Dorsolateral prefrontal cortex (tissue), 120 donors: ENCODE measurements at regions of chr6 and their contacts with region 1.

Region 1: GRCh38 chr6:33585403-33586107 is 5.5 kb upstream of the BAK1 start:
- DNase-seq: peak; percentile 69 to 87 (median 78)
- H3K4me3 ChIP-seq: peak overlapping the region in 44 of 59 donors; percentile 1 to 53 (median 32)
- H3K27ac ChIP-seq: peak overlapping the region in 14 of 59 donors; percentile 1 to 58 (median 22)
- H3K27me3 ChIP-seq: no peaks in the 10 kb centered on the region
- CTCF ChIP-seq: peak; percentile 75 to 100 (median 96)

Region 2: GRCh38 chr6:33467091-33467490 is 118.5 kb before region 1 on chr6:
- intact Hi-C with region 1: no loop called
- DNase-seq: no peak
- H3K4me3 ChIP-seq: no peak overlapping the region
- H3K27ac ChIP-seq: no peak overlapping the region
- H3K27me3 ChIP-seq: no peaks in the 10 kb centered on the region
- CTCF ChIP-seq: no peak

Region 3: DNA sequence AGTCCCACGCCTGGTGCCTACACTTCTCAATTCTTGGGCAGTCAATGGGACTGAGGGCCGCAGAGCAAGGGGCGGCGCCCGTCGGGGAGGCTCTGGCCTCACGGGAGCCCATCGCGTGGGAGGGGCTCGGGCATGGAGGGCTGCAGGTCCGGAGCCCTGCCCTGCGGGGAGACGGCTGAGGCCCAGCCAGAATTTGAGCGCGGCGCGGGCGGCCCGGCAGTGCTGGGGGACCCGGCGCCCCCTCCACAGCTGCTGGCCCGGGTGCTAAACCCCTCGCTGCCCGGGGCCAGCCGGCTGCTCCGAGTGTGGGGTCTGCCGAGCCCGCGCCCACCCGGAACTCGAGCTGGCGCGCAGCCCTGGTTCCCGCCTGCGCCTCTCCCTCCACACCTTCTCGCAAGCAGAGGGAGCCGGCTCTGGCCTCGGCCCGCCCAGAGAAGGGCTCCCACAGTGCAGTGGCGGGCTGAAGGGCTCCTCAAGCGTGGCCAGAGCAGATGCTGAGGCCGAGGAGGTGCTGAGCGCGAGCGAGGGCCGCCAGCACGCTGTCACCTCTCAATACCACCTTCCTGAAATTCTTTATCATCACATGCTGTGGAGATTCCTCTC is 64.0 kb before region 1 on chr6:
- intact Hi-C with region 1: no loop called
- DNase-seq: no peak
- H3K4me3 ChIP-seq: no peak overlapping the region
- H3K27ac ChIP-seq: no peak overlapping the region
- H3K27me3 ChIP-seq: peaks cover 0 to 4% (median 0%) of the 10 kb centered on the region in 45 donors
- CTCF ChIP-seq: no peak

Region 4: DNA sequence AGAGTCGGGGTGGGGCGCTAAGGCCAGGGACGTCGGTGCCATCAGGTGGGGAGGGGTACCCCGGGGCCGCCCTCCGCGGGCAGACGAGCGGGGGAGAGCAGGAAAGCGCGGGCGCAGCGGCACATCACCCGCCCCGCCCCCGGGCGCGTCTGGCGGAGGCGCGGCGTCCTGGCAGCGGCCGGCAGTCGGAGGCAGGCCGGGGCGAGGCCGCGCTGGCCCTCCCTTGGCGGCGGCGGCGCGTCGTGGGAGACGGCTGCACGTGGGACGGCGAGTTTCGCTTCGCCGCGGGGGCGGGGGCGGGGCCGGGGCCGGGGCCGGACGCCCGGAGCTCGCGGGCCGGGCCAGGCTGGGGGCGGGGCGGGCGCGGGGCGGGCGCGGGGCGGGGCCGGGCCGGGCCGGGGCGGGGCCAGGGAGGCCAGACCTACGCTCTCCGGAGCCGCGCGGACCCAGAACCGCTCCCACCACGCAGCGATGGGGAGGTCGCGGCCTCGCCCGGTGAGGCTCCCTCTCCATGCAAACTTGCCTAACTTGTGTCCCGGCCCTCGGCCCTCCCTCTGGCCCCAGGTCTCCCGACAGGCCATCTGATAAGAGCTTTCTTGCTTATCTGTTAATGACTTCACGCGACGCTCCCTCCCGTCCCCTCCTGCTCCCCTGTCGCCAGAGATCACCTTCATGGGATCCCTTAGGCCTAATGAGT is 48.1 kb after region 1 on chr6:
- intact Hi-C with region 1: loop called (anchors 2 to 5 kb)
- DNase-seq: peak in 6 of 10 donors; percentile 31 to 69 (median 51)
- H3K4me3 ChIP-seq: peak overlapping the region; percentile 33 to 71 (median 56)
- H3K27ac ChIP-seq: peak overlapping the region in 9 of 59 donors; percentile 3 to 73 (median 31)
- H3K27me3 ChIP-seq: no peaks in the 10 kb centered on the region
- CTCF ChIP-seq: no peak

Region 5: GRCh38 chr6:33700391-33701050 is 115.0 kb after region 1 on chr6:
- intact Hi-C with region 1: loop called (anchors 2 to 5 kb)
- DNase-seq: peak in 5 of 10 donors; percentile 28 to 67 (median 54)
- H3K4me3 ChIP-seq: no peak overlapping the region
- H3K27ac ChIP-seq: peak overlapping the region in 1 of 59 donors; percentile 19
- H3K27me3 ChIP-seq: no peaks in the 10 kb centered on the region
- CTCF ChIP-seq: peak in 55 of 56 donors; percentile 33 to 81 (median 64)

Region 6: DNA sequence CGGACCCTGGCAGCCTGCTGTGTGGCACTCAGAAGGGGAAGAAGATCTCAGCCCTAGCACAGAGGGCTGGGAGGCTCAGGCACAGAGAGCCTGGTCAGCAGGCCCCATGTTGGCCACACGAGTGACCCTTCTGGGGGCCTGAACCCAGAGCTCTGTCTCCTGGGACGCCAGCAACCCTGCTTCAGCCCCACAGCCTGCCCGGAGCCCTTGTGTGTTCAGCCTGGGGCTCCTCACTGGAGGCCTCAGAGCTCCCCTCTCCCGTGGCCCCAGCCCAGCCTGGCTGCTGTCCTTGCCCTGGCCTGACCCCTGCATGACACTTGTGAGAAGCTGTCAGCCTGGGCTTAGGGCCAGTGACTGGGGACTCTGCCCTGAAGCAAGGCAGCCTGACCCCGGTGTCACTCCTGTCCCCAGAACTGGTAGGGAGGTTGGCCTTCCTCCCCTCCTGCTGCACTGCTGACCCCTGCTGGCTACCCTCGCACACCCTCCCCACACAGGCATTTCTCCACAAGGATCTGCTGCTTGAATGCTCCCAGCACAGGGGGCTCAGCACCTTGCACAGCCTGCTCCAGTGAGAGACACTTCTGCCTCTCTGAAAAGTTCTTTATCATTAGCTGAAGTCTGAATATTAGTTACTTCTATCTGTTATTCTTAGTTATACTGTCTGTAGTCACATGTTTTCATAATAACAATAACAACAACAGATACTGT is 176.5 kb after region 1 on chr6:
- intact Hi-C with region 1: loop called in 1 of 2 experiments (anchors 2 kb)
- DNase-seq: peak in 9 of 10 donors; percentile 49 to 79 (median 64)
- H3K4me3 ChIP-seq: no peak overlapping the region
- H3K27ac ChIP-seq: peak overlapping the region in 22 of 59 donors; percentile 6 to 69 (median 32)
- H3K27me3 ChIP-seq: no peaks in the 10 kb centered on the region
- CTCF ChIP-seq: peak; percentile 35 to 87 (median 64)